ENCODE measurements at regions of chr3 and their contacts with region 1.

Region 1: DNA sequence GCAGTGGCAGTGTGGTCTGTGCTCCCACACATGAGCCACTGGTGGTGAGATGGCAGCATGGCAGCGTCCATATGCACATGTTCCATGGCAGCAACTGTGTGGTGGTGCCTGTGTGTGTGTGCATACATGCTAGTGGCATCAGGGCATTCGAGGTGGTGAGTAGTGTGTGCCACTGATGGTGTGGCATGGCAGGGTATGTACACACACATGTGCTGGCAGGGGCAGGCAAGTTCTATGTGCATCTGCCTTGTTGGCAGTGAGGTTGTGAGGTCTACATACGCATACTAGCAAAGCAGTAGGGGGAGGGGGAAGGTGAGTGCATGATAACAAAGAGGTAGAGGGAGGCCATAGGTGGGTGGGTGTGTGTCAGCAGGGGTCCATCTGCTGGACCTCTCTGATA is 378.7 kb downstream of the C3orf38 start:
- DNase-seq: no peak
- H3K4me3 Mint-ChIP-seq: no peak overlapping the region
- H3K27ac Mint-ChIP-seq: no peak overlapping the region
- H3K4me1 Mint-ChIP-seq: no peaks in the 10 kb centered on the region
- H3K27me3 Mint-ChIP-seq: no peaks in the 10 kb centered on the region

Region 2: DNA sequence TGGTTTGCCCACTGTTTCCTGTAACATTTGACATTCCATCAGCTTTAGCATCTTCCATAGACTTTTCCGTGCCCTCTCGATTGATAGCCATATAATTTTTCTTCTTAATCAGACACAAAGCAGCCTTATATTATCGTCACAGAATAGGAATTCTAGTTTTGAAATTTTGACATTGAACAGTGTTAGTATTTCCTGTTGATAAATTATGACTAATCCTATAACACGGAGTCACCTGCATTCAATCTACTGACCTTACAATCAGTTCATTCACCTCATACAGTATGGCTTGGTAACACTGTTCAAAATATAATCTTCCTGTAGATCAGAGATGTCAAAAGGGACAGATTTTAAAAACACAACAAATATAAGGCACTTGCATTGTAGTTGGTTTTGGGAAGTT is 45.0 kb after region 1 on chr3:
- intact Hi-C with region 1: loop called (anchors 5 kb)
- DNase-seq: no peak
- H3K4me3 Mint-ChIP-seq: no peak overlapping the region
- H3K27ac Mint-ChIP-seq: no peak overlapping the region
- H3K4me1 Mint-ChIP-seq: no peaks in the 10 kb centered on the region
- H3K27me3 Mint-ChIP-seq: no peaks in the 10 kb centered on the region

Region 3: DNA sequence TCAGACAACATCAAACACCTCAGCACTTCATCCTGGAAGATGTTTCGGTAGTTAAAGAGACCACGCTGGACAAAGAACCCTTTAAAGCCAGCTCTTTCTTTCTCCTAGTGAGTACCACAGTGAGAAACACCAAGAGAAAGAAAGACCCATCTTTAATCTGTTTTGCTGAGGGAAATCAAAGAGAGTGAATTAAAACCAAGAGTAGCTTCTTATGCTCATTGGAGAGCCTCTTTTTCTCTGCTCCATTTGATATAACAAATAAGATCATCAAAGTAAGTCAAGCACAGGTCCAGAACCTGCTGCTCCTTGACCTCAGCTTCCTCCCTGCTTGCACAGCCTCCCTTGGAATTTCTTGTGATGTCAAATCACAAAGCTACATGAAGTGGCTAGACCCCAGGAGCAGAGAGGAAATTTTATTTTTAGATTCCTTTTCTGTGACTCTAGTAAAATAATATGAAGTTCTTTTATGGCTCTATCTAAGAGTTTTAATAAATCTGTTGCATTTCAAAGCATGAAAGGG is 57.7 kb after region 1 on chr3:
- intact Hi-C with region 1: no loop called
- DNase-seq: no peak
- H3K4me3 Mint-ChIP-seq: no peak overlapping the region
- H3K27ac Mint-ChIP-seq: no peak overlapping the region
- H3K4me1 Mint-ChIP-seq: no peaks in the 10 kb centered on the region
- H3K27me3 Mint-ChIP-seq: no peaks in the 10 kb centered on the region